CD4-positive, alpha-beta memory T cell (primary cell): ENCODE measurements at regions of chr9 and their contacts with region 1.

Region 1: DNA sequence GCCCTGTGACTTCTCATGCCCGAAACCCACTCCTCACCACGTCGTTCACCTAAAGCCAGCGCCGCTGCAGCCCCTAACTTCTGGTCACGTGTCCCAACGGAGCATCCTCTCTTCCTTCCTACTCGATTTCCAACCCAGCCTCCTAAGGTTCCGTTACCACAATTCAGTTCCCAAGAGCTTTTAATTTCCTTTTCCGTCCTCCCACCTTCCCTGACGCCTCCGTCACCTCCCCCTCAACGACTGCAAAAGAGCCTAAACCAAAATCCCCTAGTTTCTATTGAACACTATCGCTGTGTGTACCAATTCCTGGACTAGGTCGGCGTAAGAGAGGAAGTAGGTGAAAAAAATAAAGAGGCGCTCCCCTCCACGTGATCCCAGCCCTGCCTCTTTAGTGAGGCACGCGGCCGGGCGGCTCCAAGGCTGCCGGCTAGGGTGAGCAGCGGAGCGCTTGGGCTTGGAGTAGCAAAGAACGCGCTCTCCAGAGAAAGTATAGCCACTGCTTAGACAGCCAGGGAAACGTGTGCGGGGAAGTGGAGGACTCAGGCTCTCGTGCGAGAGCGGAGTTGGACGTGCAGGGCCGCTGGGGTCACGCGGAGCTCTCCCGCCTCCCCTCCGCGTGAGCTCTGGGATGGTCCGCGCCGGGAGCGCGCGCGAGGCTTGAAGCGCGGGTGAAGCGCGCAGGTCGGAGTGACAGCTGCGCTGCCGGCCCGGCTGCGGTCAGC is at the starts of genes CENPP and NOL8:
- DNase-seq: peak; percentile 89 to 91 (median 91)
- H3K4me3 ChIP-seq: peak within 1 kb of the TSS; percentile 97 to 100
- H3K4me3 Mint-ChIP-seq: peak within 1 kb of the TSS; percentile 95 to 99 (median 98)
- H3K27ac ChIP-seq: peak within 1 kb of the TSS; percentile 92
- H3K27ac Mint-ChIP-seq: peak within 1 kb of the TSS; percentile 91 to 100 (median 99)
- H3K4me1 ChIP-seq: peaks cover 26% of the 10 kb centered on the region
- H3K4me1 Mint-ChIP-seq: peaks cover 8 to 41% (median 30%) of the 10 kb centered on the region in 4 donors
- H3K27me3 ChIP-seq: no peaks in the 10 kb centered on the region
- H3K27me3 Mint-ChIP-seq: no peaks in the 10 kb centered on the region
- total RNA-seq, gene CENPP: 0.55 to 4.3 TPM
- total RNA-seq, gene NOL8: 93.9 to 104 TPM

Region 2: DNA sequence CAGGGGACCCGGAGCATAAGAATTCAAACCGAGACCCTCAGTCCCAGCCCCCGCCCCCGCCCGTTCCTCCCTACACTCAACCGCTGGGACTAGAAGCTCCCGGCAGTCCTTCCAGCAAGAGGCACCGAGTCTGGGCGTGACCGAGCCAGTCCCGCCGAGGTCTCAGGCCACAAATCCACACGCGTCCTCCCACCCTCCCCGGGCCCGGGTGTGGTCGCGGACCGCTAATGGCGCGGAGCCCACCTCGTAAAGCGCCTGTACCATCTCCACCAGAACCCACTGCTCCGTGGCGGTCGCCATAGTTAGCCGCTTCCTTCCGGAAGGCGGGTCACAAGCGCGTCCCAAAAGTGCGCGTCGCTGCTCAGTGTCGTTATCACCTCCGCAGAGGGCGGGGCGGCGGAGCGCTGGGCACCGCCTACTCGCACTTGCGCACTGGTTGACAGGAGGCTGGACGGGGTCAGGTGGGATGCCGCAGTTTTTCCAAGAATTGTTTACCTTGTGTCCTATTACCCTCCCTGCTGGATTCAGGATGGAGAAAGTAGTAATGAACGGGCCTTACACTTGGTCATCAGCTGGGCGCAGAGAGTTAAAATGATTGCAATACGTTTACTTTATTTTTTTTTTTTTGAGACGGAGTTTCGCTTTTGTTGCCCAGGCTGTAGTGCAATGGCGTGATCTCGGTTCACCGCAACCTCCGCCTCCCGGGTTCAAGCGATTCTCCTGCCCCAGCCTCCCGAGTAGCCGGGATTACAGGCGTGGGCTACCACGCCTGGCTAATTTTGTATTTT is 210.2 kb before region 1 on chr9 and contains the start of gene SPTLC1:
- CTCF ChIA-PET with region 1: no interaction called
- POLR2A ChIA-PET with region 1: interaction called, 4 read pairs
- intact Hi-C with region 1: loop called (anchors 1 kb)
- DNase-seq: peak; percentile 90 to 95 (median 94)
- H3K4me3 ChIP-seq: peak within 1 kb of the TSS; percentile 66 to 90
- H3K4me3 Mint-ChIP-seq: peak within 1 kb of the TSS; percentile 97 to 99 (median 99)
- H3K27ac ChIP-seq: peak within 1 kb of the TSS; percentile 89
- H3K27ac Mint-ChIP-seq: peak within 1 kb of the TSS; percentile 96 to 100 (median 99)
- H3K4me1 ChIP-seq: peaks cover 26% of the 10 kb centered on the region
- H3K4me1 Mint-ChIP-seq: peaks cover 26 to 48% (median 34%) of the 10 kb centered on the region in 4 donors
- H3K27me3 ChIP-seq: no peaks in the 10 kb centered on the region
- H3K27me3 Mint-ChIP-seq: no peaks in the 10 kb centered on the region
- total RNA-seq, gene SPTLC1: 56.8 to 57.9 TPM

Region 3: DNA sequence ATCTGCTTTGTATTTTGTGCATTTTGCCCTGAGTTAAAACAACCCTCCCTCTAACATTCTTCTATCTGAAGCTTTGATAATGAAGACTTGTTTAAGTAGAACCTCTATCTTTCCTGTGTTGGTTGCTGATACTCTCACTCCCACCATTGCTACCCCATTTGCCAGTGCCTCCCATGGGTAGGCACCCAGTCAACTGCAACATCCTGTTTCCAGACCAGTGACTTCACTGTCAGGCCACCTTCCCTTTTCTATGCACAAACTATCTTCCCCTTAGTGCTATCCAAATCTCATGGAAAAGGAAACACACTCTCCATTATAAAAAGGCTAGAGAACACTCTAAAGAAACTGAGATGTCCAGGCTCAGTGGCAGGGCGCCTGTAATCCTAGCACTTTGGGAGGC is 26.3 kb before region 1 on chr9:
- CTCF ChIA-PET with region 1: interaction called, 3 read pairs
- POLR2A ChIA-PET with region 1: interaction called, 18 read pairs
- intact Hi-C with region 1: no loop called
- DNase-seq: no peak
- H3K4me3 ChIP-seq: no peak overlapping the region
- H3K4me3 Mint-ChIP-seq: peak overlapping the region in 2 of 8 donors; percentile 4 to 23
- H3K27ac ChIP-seq: no peak overlapping the region
- H3K27ac Mint-ChIP-seq: peak overlapping the region in 6 of 7 donors; percentile 28 to 81 (median 63)
- H3K4me1 ChIP-seq: peaks cover 22% of the 10 kb centered on the region
- H3K4me1 Mint-ChIP-seq: peaks cover 19 to 38% (median 29%) of the 10 kb centered on the region in 4 donors
- H3K27me3 ChIP-seq: no peaks in the 10 kb centered on the region
- H3K27me3 Mint-ChIP-seq: no peaks in the 10 kb centered on the region